CD8-positive, alpha-beta memory T cell (primary cell): ENCODE measurements at regions of chr20 and their contacts with region 1.

Region 1: DNA sequence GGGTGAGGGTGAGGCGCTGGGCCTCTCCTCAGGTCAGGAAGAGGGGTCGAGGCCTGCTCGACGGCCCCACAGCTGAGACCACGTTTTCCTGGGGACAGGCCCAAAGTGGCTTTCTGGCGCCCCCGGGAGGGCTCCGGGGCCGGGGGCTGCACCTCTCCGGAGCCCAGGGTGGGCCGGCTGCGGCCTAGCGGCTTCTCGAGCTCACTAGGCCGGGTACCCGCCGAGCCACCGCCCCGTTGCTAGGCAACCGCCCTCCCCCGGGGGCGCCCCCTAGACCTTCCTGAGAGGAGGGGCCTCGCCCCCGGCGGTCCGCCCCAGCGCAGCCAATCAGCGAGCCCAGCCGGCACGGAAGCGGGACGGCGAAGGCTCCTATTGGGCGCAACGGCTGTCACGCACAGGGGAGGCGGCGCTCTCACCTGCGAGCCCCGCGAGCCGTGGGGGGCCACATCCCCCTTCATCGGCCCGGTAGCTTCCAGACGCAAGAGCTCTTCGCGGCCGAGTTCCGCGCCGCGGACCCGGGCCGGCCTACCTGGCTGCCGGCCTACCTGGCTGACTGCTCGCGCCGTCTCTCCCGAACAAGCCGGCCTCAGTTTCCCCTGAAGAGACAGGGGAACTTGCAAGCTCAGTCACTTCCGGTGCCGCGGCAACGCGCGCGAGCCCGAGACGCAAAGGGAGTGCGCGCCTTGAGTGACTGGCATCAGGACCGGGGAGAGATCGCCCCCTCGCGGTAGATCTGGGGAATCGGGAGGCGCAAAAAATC is 831 bp upstream of the BCL2L1 start:
- DNase-seq: peak; percentile 98 to 100 (median 99)
- H3K4me3 ChIP-seq: peak overlapping the region; percentile 99
- H3K4me3 Mint-ChIP-seq: peak overlapping the region; percentile 88 to 98 (median 96)
- H3K27ac ChIP-seq: peak overlapping the region; percentile 97
- H3K27ac Mint-ChIP-seq: peak overlapping the region; percentile 49 to 99 (median 97)
- H3K4me1 ChIP-seq: peaks cover 37% of the 10 kb centered on the region
- H3K4me1 Mint-ChIP-seq: peaks cover 39 to 44% (median 43%) of the 10 kb centered on the region in 3 donors
- H3K27me3 ChIP-seq: no peaks in the 10 kb centered on the region
- H3K27me3 Mint-ChIP-seq: peaks cover 0 to 3% of the 10 kb centered on the region in 2 donors

Region 2: GRCh38 chr20:31527266-31527665 is 196.2 kb before region 1 on chr20:
- CTCF ChIA-PET with region 1: no interaction called
- POLR2A ChIA-PET with region 1: no interaction called
- DNase-seq: no peak
- H3K4me3 ChIP-seq: no peak overlapping the region
- H3K4me3 Mint-ChIP-seq: no peak overlapping the region
- H3K27ac ChIP-seq: no peak overlapping the region
- H3K27ac Mint-ChIP-seq: no peak overlapping the region
- H3K4me1 ChIP-seq: no peaks in the 10 kb centered on the region
- H3K4me1 Mint-ChIP-seq: peaks cover 20 to 39% (median 36%) of the 10 kb centered on the region in 3 donors
- H3K27me3 ChIP-seq: no peaks in the 10 kb centered on the region
- H3K27me3 Mint-ChIP-seq: no peaks in the 10 kb centered on the region

Region 3: GRCh38 chr20:31633339-31633914 is 90.1 kb before region 1 on chr20:
- CTCF ChIA-PET with region 1: interaction called, 31 read pairs
- POLR2A ChIA-PET with region 1: interaction called, 4 read pairs
- DNase-seq: no peak
- H3K4me3 ChIP-seq: no peak overlapping the region
- H3K4me3 Mint-ChIP-seq: no peak overlapping the region
- H3K27ac ChIP-seq: no peak overlapping the region
- H3K27ac Mint-ChIP-seq: no peak overlapping the region
- H3K4me1 ChIP-seq: no peaks in the 10 kb centered on the region
- H3K4me1 Mint-ChIP-seq: no peaks in the 10 kb centered on the region
- H3K27me3 ChIP-seq: no peaks in the 10 kb centered on the region
- H3K27me3 Mint-ChIP-seq: no peaks in the 10 kb centered on the region

Region 4: DNA sequence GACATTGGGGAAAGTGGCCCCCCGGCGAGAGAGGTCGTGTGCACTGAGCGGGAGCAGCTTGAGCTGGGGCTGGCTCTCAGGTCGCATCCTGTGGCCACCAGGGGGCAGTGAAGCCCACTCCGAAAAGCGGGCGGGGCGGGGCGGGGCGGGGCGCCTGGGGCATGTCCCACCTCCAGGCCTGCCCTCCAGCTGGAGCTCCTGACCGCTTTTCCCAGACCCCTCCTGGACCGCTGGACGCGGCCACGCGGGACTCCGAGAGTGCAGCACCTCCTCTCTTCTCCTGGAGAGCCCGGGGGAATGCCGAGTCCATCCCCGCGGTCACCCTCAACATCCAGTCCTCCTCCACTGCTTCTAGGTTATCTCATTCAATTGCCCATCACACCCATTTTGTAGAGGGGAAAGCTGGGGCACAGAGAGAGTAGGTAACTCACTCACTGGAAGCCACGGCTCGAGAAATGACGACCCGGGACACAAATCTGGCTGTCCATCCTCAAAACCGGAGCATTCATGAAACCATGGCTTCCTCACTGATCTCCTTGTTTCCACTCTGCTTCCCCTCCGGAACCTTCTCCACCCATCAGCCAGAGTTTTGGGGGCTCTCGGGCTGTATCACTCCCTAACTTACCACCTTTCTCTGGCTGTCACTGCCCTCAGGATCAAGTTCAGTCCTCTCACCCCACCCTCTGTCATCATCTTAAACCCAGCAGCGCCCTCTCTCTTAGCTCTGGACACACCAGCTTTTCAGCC is 61.7 kb before region 1 on chr20:
- CTCF ChIA-PET with region 1: interaction called, 295 read pairs
- POLR2A ChIA-PET with region 1: interaction called, 68 read pairs
- DNase-seq: peak; percentile 67 to 85 (median 75)
- H3K4me3 ChIP-seq: peak overlapping the region; percentile 72
- H3K4me3 Mint-ChIP-seq: peak overlapping the region; percentile 3 to 88 (median 79)
- H3K27ac ChIP-seq: peak overlapping the region; percentile 65
- H3K27ac Mint-ChIP-seq: peak overlapping the region; percentile 48 to 96 (median 86)
- H3K4me1 ChIP-seq: peaks cover 33% of the 10 kb centered on the region
- H3K4me1 Mint-ChIP-seq: peaks cover 41 to 46% (median 45%) of the 10 kb centered on the region in 3 donors
- H3K27me3 ChIP-seq: no peaks in the 10 kb centered on the region
- H3K27me3 Mint-ChIP-seq: no peaks in the 10 kb centered on the region

Region 5: GRCh38 chr20:31684153-31685015 is 39.1 kb before region 1 on chr20:
- CTCF ChIA-PET with region 1: interaction called, 29 read pairs
- POLR2A ChIA-PET with region 1: interaction called, 4 read pairs
- DNase-seq: peak in 2 of 5 donors; percentile 40 to 49
- H3K4me3 ChIP-seq: no peak overlapping the region
- H3K4me3 Mint-ChIP-seq: peak overlapping the region in 6 of 7 donors; percentile 41 to 74 (median 68)
- H3K27ac ChIP-seq: peak overlapping the region; percentile 52
- H3K27ac Mint-ChIP-seq: peak overlapping the region; percentile 80 to 98 (median 94)
- H3K4me1 ChIP-seq: peaks cover 77% of the 10 kb centered on the region
- H3K4me1 Mint-ChIP-seq: peaks cover 79 to 89% (median 82%) of the 10 kb centered on the region in 3 donors
- H3K27me3 ChIP-seq: no peaks in the 10 kb centered on the region
- H3K27me3 Mint-ChIP-seq: no peaks in the 10 kb centered on the region

Region 6: DNA sequence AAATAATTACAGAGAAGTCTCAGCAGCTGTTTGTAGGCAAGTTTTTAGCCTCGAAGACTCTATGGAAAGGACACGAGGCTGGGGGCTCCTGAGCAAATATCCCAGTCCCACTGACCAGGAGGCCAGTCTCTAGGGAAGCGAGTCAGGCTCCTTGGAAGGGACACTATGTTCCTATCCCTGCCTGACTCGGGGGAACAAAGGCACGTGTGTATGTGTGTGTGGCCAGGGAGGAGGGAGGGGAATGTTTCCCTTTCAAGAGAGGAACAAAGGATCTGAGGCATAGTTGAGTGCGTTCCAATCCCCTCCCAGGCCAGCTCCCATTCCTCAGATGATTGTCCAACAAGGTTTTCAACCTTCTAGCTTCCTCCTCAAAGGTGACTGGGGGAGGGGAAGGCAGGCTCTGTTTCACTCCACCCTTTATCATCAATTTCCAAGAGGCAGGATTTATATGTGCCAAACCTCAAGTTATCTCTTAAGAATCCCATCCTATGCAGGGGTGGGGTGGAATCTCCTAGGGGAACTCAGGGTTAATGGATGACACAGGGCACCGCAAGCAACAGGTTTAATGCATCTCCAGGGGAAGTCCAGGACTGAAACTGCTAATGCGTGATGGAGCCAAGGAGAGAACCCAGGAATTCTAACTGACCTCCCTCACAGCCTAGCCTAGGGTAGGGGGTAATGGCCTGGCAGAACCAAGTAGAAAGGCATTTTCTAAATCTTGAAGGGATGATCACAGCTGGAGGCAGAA is 10.8 kb before region 1 on chr20:
- CTCF ChIA-PET with region 1: interaction called, 52 read pairs
- POLR2A ChIA-PET with region 1: interaction called, 3 read pairs
- DNase-seq: no peak
- H3K4me3 ChIP-seq: no peak overlapping the region
- H3K4me3 Mint-ChIP-seq: peak overlapping the region in 4 of 7 donors; percentile 12 to 57 (median 45)
- H3K27ac ChIP-seq: peak overlapping the region; percentile 28
- H3K27ac Mint-ChIP-seq: peak overlapping the region in 7 of 8 donors; percentile 49 to 89 (median 85)
- H3K4me1 ChIP-seq: peaks cover 76% of the 10 kb centered on the region
- H3K4me1 Mint-ChIP-seq: peaks cover 81 to 97% (median 95%) of the 10 kb centered on the region in 3 donors
- H3K27me3 ChIP-seq: no peaks in the 10 kb centered on the region
- H3K27me3 Mint-ChIP-seq: no peaks in the 10 kb centered on the region

Region 7: DNA sequence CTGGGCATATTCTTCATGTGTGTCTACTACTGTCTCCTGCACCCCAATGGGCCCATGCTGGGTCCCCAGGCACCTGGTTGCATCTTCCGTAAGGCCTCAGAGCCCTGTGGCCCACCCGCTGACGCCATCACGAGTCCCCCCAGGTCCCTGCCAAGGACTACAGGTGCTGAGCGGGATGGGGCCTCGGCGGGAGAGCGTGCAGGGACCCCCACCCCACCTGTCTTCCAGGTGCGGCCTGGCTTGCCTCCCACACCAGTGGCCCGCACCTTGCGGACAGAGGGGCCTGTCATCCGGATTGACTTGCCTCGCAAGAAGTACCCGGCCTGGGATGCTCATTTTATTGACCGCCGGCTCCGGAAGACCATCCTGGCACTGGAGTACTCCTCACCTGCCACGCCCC is 273.5 kb after region 1 on chr20:
- CTCF ChIA-PET with region 1: no interaction called
- POLR2A ChIA-PET with region 1: no interaction called
- DNase-seq: no peak
- H3K4me3 ChIP-seq: no peak overlapping the region
- H3K4me3 Mint-ChIP-seq: no peak overlapping the region
- H3K27ac ChIP-seq: no peak overlapping the region
- H3K27ac Mint-ChIP-seq: no peak overlapping the region
- H3K4me1 ChIP-seq: no peaks in the 10 kb centered on the region
- H3K4me1 Mint-ChIP-seq: peaks cover 0 to 3% (median 0%) of the 10 kb centered on the region in 3 donors
- H3K27me3 ChIP-seq: peaks cover 5% of the 10 kb centered on the region
- H3K27me3 Mint-ChIP-seq: peaks cover 32 to 41% of the 10 kb centered on the region in 2 donors

Region 8: GRCh38 chr20:32132911-32133549 is 409.5 kb after region 1 on chr20:
- CTCF ChIA-PET with region 1: no interaction called
- POLR2A ChIA-PET with region 1: no interaction called
- DNase-seq: no peak
- H3K4me3 ChIP-seq: no peak overlapping the region
- H3K4me3 Mint-ChIP-seq: no peak overlapping the region
- H3K27ac ChIP-seq: no peak overlapping the region
- H3K27ac Mint-ChIP-seq: peak overlapping the region in 3 of 8 donors; percentile 8 to 62 (median 8)
- H3K4me1 ChIP-seq: no peaks in the 10 kb centered on the region
- H3K4me1 Mint-ChIP-seq: peaks cover 18 to 38% (median 28%) of the 10 kb centered on the region in 3 donors
- H3K27me3 ChIP-seq: no peaks in the 10 kb centered on the region
- H3K27me3 Mint-ChIP-seq: peaks cover 0 to 1% of the 10 kb centered on the region in 2 donors